ENCODE measurements at regions of chr3 and their contacts with region 1.

Region 1: DNA sequence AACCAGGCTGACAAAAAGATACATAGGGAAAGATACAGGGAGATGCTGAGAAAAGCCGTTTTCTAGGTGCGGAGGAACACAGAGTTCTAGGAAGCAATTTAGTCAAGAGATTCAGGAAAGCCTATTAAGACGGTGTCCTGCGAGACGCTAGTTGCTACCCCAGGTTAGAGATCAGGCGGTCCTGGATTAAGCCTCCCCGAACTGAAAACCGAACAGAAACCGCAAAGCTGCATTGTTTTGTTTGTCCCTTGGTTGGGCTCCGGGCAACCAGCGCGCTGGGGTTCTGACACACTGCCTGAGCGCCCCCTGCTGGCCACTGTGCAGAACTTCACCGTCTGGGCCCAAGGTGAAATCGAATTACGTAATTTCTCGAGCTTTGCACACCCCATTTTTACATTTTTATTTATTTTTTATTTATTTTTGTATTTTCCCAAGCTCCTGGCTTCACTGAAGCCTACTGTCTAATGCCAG is 37.3 kb upstream of the NDUFB4 start:
- DNase-seq: peak; percentile 81
- H3K4me3 Mint-ChIP-seq: peak overlapping the region; percentile 79
- H3K27ac Mint-ChIP-seq: peak overlapping the region; percentile 68
- H3K4me1 Mint-ChIP-seq: peaks cover 23% of the 10 kb centered on the region
- H3K27me3 Mint-ChIP-seq: peaks cover 2% of the 10 kb centered on the region

Region 2: DNA sequence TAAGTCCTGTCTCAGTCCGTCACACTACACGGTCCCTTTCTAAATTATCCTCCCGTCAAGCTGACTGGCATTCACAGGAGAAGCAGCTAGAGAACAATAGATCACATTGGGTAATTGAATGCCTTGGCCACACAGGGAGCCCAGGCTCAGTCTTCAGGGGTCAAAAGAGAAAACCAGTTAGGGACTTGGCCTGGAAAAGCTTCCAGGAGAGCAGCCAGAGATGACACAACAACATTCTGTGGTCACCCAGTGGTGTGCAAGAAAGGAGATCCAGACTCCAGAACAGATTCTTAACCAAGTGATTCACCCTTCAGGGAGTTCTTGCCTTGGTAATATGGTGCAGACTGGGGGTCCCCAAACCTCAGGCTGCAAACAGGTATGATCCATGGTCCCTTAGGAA is 1248.7 kb before region 1 on chr3:
- intact Hi-C with region 1: no loop called
- DNase-seq: no peak
- H3K4me3 Mint-ChIP-seq: no peak overlapping the region
- H3K27ac Mint-ChIP-seq: no peak overlapping the region
- H3K4me1 Mint-ChIP-seq: peaks cover 18% of the 10 kb centered on the region
- H3K27me3 Mint-ChIP-seq: peaks cover 36% of the 10 kb centered on the region

Region 3: DNA sequence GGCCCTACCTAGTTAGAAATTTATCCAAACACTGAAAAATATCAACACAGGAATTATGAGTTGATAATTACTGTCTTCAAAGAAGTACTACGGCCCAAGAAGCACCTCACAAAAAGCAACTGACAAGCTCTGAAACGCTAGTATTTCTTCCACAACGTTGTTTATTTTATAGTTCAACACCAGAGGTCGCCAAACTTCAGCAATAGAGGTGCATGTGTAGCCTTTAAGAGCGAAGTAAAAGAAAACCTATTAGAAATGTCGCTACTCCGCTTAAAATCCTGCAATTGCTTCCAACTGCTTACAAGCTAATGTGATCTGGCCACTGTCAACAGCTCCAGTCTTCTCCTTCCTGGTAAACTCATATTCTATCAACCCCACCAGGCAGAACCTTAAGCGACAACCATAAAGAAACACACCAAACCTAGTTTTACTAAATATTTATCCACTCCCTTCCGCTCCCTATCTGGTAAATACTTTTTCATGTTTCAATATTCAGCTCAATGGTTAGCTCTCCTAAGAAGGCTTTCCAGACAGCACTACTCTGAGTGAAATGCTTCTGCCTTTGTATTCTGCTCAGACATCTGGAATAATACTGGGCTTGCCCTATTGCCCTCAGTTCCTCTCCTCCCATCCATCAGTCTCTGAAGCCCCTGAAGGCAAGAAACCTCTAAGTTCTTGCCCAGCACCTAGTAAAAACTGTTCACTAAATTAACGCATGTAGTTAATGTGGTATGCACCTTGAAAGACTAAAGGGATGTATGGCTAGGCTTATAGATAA is 666.7 kb before region 1 on chr3:
- intact Hi-C with region 1: loop called (anchors 1 kb)
- DNase-seq: peak; percentile 35
- H3K4me3 Mint-ChIP-seq: no peak overlapping the region
- H3K27ac Mint-ChIP-seq: no peak overlapping the region
- H3K4me1 Mint-ChIP-seq: peaks cover 10% of the 10 kb centered on the region
- H3K27me3 Mint-ChIP-seq: no peaks in the 10 kb centered on the region

Region 4: DNA sequence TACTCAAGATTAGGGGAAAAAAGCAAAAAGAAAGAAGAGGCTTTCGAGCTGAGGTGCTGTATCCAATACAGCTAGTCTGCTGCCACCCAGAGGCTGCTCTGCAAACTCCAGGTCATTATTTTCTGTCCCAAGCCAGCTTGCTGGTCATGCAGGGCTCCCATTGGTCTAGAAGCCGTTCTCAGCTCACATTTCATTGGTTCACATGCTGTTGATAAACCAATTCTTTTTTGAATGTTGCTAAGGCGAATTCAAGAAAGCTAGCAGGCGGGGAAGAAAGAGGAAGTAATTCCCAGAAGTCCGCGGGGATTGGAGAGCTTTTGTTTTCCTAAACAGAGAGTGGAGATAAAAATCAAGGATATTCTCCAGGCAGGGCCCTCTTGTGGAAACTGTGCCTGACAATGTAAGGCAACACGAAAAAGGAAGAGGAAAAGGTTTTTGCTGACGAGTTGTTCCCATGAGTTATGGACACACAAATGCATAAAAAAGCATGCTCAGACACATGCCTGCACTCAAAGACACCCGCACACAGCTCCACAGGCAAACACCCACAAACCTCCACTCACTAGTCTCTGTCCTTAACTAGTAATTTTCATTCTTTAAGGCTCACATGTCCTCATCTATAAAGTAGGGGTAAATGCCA is 141.4 kb before region 1 on chr3:
- intact Hi-C with region 1: loop called (anchors 1 kb)
- DNase-seq: peak; percentile 78
- H3K4me3 Mint-ChIP-seq: peak overlapping the region; percentile 84
- H3K27ac Mint-ChIP-seq: no peak overlapping the region
- H3K4me1 Mint-ChIP-seq: peaks cover 22% of the 10 kb centered on the region
- H3K27me3 Mint-ChIP-seq: peaks cover 2% of the 10 kb centered on the region

Region 5: DNA sequence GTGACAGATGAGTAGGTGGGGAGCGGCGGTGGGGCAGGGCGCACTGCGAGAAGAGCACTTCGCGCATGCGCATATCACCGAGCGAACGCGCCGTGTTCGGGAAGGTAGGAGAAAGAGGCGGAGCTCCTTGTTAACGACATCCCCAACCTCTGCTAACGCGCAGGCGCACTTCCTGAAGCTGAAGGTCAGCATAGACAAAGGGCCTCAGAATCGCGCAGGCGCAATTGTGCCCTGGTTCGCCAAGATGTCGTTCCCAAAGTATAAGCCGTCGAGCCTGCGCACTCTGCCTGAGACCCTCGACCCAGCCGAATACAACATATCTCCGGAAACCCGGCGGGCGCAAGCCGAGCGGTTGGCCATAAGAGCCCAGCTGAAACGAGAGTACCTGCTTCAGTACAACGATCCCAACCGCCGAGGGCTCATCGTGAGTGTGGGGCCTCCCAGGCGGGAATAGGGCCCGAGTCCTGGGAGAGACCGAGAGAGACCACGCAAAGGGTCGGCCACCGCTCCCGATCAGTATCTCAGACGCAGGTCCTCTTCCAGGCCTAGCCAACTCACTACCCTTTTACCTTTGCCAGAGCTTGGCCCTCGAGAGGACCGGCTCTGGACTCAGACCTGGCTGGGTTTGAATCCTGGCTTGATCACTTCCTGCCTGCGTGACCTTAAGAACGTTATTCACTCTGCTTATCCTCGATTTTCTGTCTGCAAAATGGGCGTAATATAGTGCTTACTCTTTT is 37.5 kb after region 1 on chr3 and contains the start of gene NDUFB4:
- intact Hi-C with region 1: loop called (anchors 1 kb)
- DNase-seq: peak; percentile 94
- H3K4me3 Mint-ChIP-seq: peak within 1 kb of the TSS; percentile 91
- H3K27ac Mint-ChIP-seq: peak within 1 kb of the TSS; percentile 96
- H3K4me1 Mint-ChIP-seq: peaks cover 15% of the 10 kb centered on the region
- H3K27me3 Mint-ChIP-seq: no peaks in the 10 kb centered on the region
- total RNA-seq, gene NDUFB4: 107 and 108 TPM in 2 replicates

Region 6: DNA sequence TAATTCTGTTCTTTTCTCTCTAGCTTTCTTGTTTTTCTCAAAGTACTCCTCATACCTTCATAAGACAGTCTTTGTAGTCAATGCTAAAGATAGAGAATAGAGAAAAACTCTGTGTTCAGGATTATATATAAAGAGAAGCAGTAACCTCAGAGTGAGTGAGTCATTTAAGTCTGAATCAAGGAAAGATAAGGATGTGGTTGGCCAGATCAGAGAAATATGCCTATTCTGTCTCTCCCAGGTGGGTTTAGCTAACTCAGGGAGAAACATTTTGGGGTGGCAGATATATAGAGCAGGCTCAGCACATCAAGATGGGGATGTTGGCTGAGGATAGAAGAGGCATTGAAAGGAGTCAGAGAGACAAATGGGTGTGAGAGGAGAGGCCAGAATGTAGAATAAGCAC is 215.1 kb after region 1 on chr3:
- intact Hi-C with region 1: no loop called
- DNase-seq: peak; percentile 11
- H3K4me3 Mint-ChIP-seq: no peak overlapping the region
- H3K27ac Mint-ChIP-seq: no peak overlapping the region
- H3K4me1 Mint-ChIP-seq: peaks cover 11% of the 10 kb centered on the region
- H3K27me3 Mint-ChIP-seq: no peaks in the 10 kb centered on the region

Region 7: DNA sequence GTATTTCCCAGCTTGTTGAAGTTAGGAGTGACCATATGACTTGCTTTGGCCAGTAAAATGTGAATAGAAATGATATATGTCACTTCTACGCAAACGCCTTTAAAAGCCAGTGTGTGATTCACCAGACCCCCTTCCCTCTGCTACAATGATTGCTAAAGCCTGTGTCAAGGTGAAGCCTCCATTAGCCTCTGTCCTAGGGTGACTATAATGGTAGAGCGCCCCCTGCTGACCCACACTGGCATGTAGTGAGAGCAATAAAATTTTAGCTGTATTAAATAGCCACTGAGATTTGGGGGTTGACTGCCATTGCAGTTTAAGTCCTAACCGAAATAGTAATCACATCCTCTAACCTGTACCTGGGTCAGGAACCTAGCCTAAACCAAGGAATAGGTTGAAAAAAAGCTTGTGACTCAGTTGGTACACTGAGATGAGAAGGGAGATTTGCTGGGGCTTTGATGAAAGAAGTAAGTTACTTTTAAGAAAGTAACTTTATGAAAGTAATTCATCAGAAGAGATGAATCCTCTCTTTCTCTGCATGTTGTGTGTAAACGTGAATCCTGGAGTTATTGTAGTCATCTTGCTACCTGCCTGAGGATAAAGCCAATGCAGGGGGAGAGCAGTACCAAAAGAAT is 236.3 kb after region 1 on chr3:
- intact Hi-C with region 1: loop called (anchors 1 kb)
- DNase-seq: peak; percentile 63
- H3K4me3 Mint-ChIP-seq: no peak overlapping the region
- H3K27ac Mint-ChIP-seq: no peak overlapping the region
- H3K4me1 Mint-ChIP-seq: no peaks in the 10 kb centered on the region
- H3K27me3 Mint-ChIP-seq: peaks cover 6% of the 10 kb centered on the region